H1 (cell line): ENCODE measurements at regions of chr2 and their contacts with region 1.

Region 1: DNA sequence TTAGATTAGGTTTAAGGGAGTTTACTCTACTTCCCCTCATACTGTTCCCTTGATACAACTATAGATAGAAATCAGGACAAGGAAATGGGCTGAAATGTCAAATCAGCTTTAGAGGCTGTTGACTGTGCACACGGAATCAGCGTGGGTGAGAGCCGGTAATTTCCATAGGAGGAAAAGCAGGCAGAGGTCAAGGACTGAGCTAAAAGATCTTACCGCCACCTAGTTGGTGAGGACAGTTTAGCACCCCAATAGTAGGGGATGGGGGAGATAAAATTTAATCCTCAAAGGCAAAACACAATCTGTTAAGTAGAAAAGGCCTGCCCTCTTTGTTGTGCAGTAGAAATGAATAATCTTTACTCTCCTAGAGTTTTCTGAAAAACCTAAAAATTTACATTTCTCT is 1154.5 kb upstream of the CHAC2 start:
- DNase-seq: no peak
- H3K4me3 ChIP-seq: no peak overlapping the region
- H3K27ac ChIP-seq: no peak overlapping the region
- H3K4me1 ChIP-seq: no peaks in the 10 kb centered on the region; a peak in 2 of 7 replicates
- H3K27me3 ChIP-seq: no peaks in the 10 kb centered on the region
- CTCF ChIP-seq: peak in 2 of 3 experiments; percentile 52 to 70; a peak in 3 of 4 replicates
- EP300 ChIP-seq: no peak
- POLR2A ChIP-seq: no peak
- RAD21 ChIP-seq: peak; percentile 85 to 88

Region 2: DNA sequence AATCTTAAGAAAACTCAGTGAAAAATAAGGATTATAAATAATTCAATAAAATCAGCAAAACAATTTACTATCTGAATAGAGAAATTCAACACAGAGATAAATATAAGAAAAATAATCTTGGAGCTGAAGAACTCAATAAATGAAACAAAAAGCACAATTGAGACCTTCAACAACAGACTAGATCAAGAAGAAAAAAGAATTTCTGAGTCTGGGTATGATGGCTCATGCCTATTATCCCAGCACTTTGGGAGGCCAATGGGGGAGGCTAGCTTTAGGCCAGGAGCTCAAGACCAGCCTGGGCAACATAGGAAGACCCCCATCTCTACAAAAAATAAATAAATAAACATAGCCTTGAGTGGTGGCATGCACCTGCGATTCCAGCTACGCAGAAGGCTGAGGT is 285.4 kb before region 1 on chr2:
- CTCF ChIA-PET with region 1: no interaction called
- POLR2A ChIA-PET with region 1: no interaction called
- DNase-seq: no peak
- H3K4me3 ChIP-seq: no peak overlapping the region
- H3K27ac ChIP-seq: no peak overlapping the region
- H3K4me1 ChIP-seq: no peaks in the 10 kb centered on the region
- H3K27me3 ChIP-seq: no peaks in the 10 kb centered on the region
- CTCF ChIP-seq: no peak
- EP300 ChIP-seq: no peak
- POLR2A ChIP-seq: no peak
- RAD21 ChIP-seq: no peak

Region 3: DNA sequence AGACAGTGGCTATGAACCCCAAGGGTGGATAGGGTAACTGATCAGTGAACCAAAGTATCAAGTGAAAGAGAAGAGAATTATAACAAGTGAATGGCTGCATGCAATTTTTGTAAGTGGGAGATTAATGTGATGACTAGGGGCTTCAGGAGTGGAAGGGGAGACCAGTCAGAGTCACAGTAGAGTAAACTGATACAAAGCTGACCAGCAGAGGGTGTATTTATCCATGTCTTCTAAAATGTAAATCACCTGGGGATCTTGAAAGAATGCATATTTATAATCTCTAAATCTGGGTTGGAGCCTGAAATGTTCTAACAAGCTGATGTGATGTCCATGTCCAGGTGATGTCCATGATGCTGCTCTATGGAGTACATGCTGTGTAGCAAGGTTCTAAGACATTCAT is 196.7 kb before region 1 on chr2:
- CTCF ChIA-PET with region 1: interaction called, 12 read pairs
- POLR2A ChIA-PET with region 1: no interaction called
- DNase-seq: no peak
- H3K4me3 ChIP-seq: no peak overlapping the region
- H3K27ac ChIP-seq: no peak overlapping the region
- H3K4me1 ChIP-seq: no peaks in the 10 kb centered on the region
- H3K27me3 ChIP-seq: no peaks in the 10 kb centered on the region
- CTCF ChIP-seq: peak in 2 of 3 experiments; percentile 33 to 39; a peak in 2 of 4 replicates
- EP300 ChIP-seq: no peak
- POLR2A ChIP-seq: no peak
- RAD21 ChIP-seq: peak; percentile 49 to 53